HepG2 (cell line): ENCODE measurements at regions of chr10 and their contacts with region 1.

Region 1: GRCh38 chr10:75099952-75100763 is 11.3 kb upstream of the SAMD8 start:
- DNase-seq: peak; percentile 50
- ATAC-seq: peak; percentile 90
- H3K4me3 ChIP-seq: peak overlapping the region; percentile 55 to 79 (median 65)
- H3K27ac ChIP-seq: no peak overlapping the region
- H3K4me1 ChIP-seq: peaks cover 34% of the 10 kb centered on the region
- H3K27me3 ChIP-seq: no peaks in the 10 kb centered on the region
- CTCF ChIP-seq: peak; percentile 99
- EP300 ChIP-seq: no peak
- POLR2A ChIP-seq: no peak
- RAD21 ChIP-seq: peak; percentile 94

Region 2: DNA sequence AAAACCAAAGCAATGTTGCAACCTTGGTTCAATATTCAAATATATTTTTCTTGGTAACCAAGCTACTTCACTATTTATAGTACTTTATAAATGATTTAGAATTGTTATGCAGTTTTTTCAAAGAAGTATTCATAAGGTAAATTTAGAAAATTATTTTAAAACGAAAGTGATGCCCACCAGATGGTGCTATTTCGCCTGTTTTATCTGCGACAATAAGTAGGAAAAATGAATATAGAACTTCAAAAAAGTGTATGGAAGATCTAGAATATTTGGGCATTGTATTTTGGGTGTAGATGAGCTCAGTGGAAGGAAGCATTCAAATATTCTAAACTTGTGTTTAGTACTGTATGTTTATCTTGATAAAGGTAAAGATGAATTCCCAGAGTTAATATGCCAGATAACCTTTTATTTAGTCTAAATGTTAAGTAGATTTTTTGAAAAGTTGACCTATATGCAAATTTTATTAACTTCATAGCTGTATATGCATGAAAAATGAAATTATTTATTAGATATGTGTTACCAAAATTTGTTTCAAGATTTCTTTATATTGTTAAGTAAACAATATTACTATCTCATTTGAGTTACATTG is 856.0 kb before region 1 on chr10:
- CTCF ChIA-PET with region 1: interaction called, 11 read pairs
- POLR2A ChIA-PET with region 1: no interaction called
- in situ Hi-C with region 1: no loop called
- intact Hi-C with region 1: no loop called
- DNase-seq: peak; percentile 7
- ATAC-seq: no peak
- H3K4me3 ChIP-seq: no peak overlapping the region
- H3K27ac ChIP-seq: no peak overlapping the region
- H3K4me1 ChIP-seq: no peaks in the 10 kb centered on the region
- H3K27me3 ChIP-seq: no peaks in the 10 kb centered on the region
- CTCF ChIP-seq: peak; percentile 44
- EP300 ChIP-seq: no peak
- POLR2A ChIP-seq: no peak
- RAD21 ChIP-seq: no peak

Region 3: GRCh38 chr10:74262856-74263255 is 837.3 kb before region 1 on chr10:
- CTCF ChIA-PET with region 1: interaction called, 14 read pairs
- POLR2A ChIA-PET with region 1: no interaction called
- in situ Hi-C with region 1: loop called (anchors 10 kb)
- intact Hi-C with region 1: loop called (anchors 1 kb)
- DNase-seq: no peak
- ATAC-seq: no peak
- H3K4me3 ChIP-seq: no peak overlapping the region
- H3K27ac ChIP-seq: no peak overlapping the region
- H3K4me1 ChIP-seq: peaks cover 5% of the 10 kb centered on the region; the same call in 1 of the 2 replicates
- H3K27me3 ChIP-seq: no peaks in the 10 kb centered on the region
- CTCF ChIP-seq: no peak
- EP300 ChIP-seq: no peak
- POLR2A ChIP-seq: no peak
- RAD21 ChIP-seq: no peak

Region 4: GRCh38 chr10:74898201-74898976 is 201.8 kb before region 1 on chr10:
- CTCF ChIA-PET with region 1: no interaction called
- POLR2A ChIA-PET with region 1: no interaction called
- in situ Hi-C with region 1: loop called (anchors 10 kb)
- intact Hi-C with region 1: no loop called
- DNase-seq: peak; percentile 28
- ATAC-seq: peak; percentile 85
- H3K4me3 ChIP-seq: no peak overlapping the region
- H3K27ac ChIP-seq: peak overlapping the region; percentile 45
- H3K4me1 ChIP-seq: peaks cover 15% of the 10 kb centered on the region
- H3K27me3 ChIP-seq: no peaks in the 10 kb centered on the region
- CTCF ChIP-seq: no peak
- EP300 ChIP-seq: no peak
- POLR2A ChIP-seq: no peak
- RAD21 ChIP-seq: no peak

Region 5: GRCh38 chr10:75062506-75063299 is 37.5 kb before region 1 on chr10:
- CTCF ChIA-PET with region 1: no interaction called
- POLR2A ChIA-PET with region 1: no interaction called
- in situ Hi-C with region 1: no loop called
- intact Hi-C with region 1: no loop called
- DNase-seq: no peak
- ATAC-seq: no peak
- H3K4me3 ChIP-seq: no peak overlapping the region
- H3K27ac ChIP-seq: no peak overlapping the region
- H3K4me1 ChIP-seq: no peaks in the 10 kb centered on the region
- H3K27me3 ChIP-seq: peaks cover 0 to 7% of the 10 kb centered on the region in 2 experiments; a peak in 3 of 5 replicates
- CTCF ChIP-seq: no peak
- EP300 ChIP-seq: no peak
- POLR2A ChIP-seq: no peak
- RAD21 ChIP-seq: no peak

Region 6: GRCh38 chr10:76106611-76107010 is 1006.5 kb after region 1 on chr10:
- CTCF ChIA-PET with region 1: no interaction called
- POLR2A ChIA-PET with region 1: no interaction called
- in situ Hi-C with region 1: no loop called
- intact Hi-C with region 1: loop called (anchors 5 kb)
- DNase-seq: no peak
- ATAC-seq: no peak
- H3K4me3 ChIP-seq: no peak overlapping the region
- H3K27ac ChIP-seq: no peak overlapping the region
- H3K4me1 ChIP-seq: peaks cover 21% of the 10 kb centered on the region
- H3K27me3 ChIP-seq: no peaks in the 10 kb centered on the region
- CTCF ChIP-seq: no peak
- EP300 ChIP-seq: no peak
- POLR2A ChIP-seq: no peak
- RAD21 ChIP-seq: no peak